Endothelial cell of umbilical vein (primary cell): ENCODE measurements at regions of chr17 and their contacts with region 1.

Region 1: GRCh38 chr17:38898812-38899348 is 26.5 kb upstream of the LASP1NB start:
- DNase-seq: peak; percentile 41
- H3K4me3 ChIP-seq: no peak overlapping the region
- H3K27ac ChIP-seq: peak overlapping the region; percentile 51
- H3K4me1 ChIP-seq: peaks cover 60% of the 10 kb centered on the region
- H3K27me3 ChIP-seq: no peaks in the 10 kb centered on the region
- CTCF ChIP-seq: no peak
- POLR2A ChIP-seq: no peak

Region 2: DNA sequence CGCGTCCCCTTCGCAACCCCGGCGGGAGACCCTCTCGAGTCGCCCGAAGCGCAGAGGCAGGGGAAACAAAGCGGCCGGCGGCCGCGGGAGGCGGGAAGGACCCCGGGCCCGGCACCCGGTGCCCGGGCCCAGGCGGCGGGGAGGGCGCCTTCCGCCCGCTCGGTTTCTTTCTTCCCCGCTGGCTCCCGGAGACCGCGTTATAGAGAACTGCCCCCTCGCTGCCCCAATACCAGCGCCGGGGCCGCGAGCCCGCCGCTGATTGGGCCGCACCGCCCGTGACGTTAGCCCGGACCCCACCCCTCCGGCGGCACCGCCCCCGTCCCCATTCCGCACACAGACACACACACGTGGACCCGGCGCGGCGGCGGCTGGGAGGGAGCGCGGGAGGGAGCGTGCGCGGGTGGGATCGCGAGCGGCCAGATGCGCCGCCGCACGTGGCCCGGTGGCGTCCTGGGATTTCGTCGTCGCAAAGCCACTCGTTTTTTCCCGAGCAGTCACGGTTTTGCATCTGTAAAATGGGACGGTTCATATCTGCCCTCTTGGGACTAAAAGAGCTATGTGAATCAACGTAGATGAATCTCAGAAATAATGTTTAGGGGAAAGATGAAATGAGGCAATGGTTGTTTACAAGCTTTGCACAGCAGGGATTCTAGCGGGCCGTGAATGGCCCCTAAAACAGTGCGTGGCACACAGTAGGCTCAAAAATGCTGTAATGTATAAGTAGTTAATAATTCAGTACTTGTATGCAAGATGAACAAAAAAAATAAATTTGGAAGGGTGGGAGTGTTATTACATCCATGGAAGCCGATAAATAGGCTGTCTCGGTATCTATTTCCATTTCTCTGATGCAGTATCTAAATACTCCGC is 223.9 kb before region 1 on chr17 and contains the start of gene EPOP:
- CTCF ChIA-PET with region 1: no interaction called
- POLR2A ChIA-PET with region 1: no interaction called
- dilution Hi-C with region 1: no loop called
- intact Hi-C with region 1: no loop called
- DNase-seq: peak; percentile 85
- H3K4me3 ChIP-seq: peak within 1 kb of the TSS; percentile 32 to 63 (median 41)
- H3K27ac ChIP-seq: no peak within 1 kb of the TSS
- H3K4me1 ChIP-seq: peaks cover 14% of the 10 kb centered on the region
- H3K27me3 ChIP-seq: peaks cover 28 to 39% of the 10 kb centered on the region in 2 experiments
- CTCF ChIP-seq: no peak
- POLR2A ChIP-seq: no peak
- total RNA-seq, gene EPOP: 2.6 and 2.9 TPM in 2 replicates

Region 3: DNA sequence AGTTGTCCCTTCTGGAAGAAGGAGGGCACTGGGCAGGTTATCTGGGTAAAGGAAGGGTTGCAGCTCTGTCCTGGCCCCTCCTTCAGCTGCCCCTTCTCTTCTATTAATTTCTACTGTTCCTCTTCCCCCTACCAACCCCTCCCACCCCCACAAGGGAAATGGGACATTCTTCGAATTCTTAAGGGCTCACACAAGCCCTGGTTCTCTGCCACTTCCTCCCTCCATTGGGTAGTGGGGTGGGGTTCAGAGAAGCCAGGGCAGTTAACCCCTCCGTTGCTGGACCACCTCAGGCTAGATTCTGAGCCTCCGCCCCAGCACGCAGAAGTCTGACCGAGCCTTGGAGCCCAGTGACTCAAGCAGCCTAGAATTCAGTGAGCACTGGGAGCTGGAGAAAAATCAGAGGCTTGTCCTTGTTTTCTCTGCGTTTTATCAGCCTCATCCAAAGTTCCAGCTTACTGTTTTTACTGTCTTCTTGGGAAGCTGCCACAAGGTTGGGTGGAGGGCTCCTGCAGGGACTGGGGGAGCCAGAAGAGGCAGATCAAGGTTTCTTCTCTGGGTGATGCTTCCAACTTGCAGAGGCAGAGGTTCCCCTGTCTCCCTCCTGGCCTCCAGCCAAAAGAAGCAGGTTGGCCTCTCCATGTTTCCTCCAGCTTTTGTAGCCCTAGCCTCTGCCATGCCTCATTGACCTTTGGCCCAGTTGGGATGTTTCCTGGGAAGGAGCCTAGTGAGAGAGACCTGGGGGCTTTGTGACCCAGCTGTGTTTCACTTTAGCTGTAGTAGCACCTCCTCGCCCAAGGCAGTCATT is 18.8 kb before region 1 on chr17:
- CTCF ChIA-PET with region 1: interaction called, 10 read pairs
- POLR2A ChIA-PET with region 1: no interaction called
- dilution Hi-C with region 1: no loop called
- intact Hi-C with region 1: loop called (anchors 2 kb)
- DNase-seq: peak; percentile 68
- H3K4me3 ChIP-seq: peak overlapping the region in 1 of 3 experiments; percentile 20
- H3K27ac ChIP-seq: peak overlapping the region; percentile 86
- H3K4me1 ChIP-seq: peaks cover 30% of the 10 kb centered on the region
- H3K27me3 ChIP-seq: no peaks in the 10 kb centered on the region
- CTCF ChIP-seq: no peak
- POLR2A ChIP-seq: no peak

Region 4: DNA sequence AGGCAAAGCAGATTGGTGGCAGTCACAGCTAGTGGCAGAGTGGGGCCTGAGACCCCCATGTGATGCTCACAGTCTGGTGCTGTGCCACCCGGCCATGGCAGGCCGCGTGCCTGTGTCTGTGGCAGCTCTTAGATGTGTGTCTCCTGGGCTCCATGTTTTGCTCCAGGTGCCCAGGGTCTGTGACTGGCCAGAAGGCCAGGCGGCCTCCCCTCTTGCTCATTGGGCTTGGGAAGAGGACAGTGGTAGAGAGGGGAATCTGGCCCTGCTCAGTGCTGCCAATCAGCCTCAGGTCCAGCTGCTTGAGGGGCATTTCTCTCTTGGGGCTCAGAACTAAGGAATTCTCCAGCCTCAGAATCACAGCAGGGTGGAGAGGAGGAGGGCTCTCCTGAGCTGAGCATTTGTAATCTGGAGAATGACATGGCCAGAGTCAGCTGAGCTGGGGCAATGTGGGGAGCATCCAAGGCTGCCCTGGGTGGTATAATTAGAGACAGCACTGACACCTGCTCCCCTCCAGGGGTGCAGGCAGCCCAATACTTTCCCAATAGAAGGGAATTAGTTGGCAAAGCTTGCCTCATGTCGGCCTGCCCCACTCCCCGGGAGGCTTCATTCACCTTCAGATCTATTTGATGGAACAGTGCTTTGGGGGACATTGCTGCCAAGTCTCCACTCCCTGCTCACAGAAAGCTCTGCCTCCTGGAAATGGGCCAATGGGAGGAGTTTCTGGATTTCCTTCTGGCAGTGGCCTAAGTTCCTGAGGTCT is 23.8 kb after region 1 on chr17:
- CTCF ChIA-PET with region 1: interaction called, 14 read pairs
- POLR2A ChIA-PET with region 1: interaction called, 3 read pairs
- dilution Hi-C with region 1: no loop called
- intact Hi-C with region 1: no loop called
- DNase-seq: peak; percentile 67
- H3K4me3 ChIP-seq: no peak overlapping the region
- H3K27ac ChIP-seq: no peak overlapping the region
- H3K4me1 ChIP-seq: no peaks in the 10 kb centered on the region
- H3K27me3 ChIP-seq: no peaks in the 10 kb centered on the region
- CTCF ChIP-seq: peak in 1 of 2 donors; percentile 9
- POLR2A ChIP-seq: peak; percentile 16